ENCODE measurements at regions of chr2 and their contacts with region 1.

Region 1: GRCh38 chr2:216114714-216115557 is 5.8 kb downstream of the XRCC5 start:
- DNase-seq: peak; percentile 87 to 96 (median 93)
- H3K4me3 ChIP-seq: peak overlapping the region; percentile 37 to 80 (median 66)
- H3K27ac ChIP-seq: peak overlapping the region; percentile 66 to 99 (median 94)
- H3K27me3 ChIP-seq: no peaks in the 10 kb centered on the region
- CTCF ChIP-seq: peak; percentile 81 to 98 (median 92)

Region 2: DNA sequence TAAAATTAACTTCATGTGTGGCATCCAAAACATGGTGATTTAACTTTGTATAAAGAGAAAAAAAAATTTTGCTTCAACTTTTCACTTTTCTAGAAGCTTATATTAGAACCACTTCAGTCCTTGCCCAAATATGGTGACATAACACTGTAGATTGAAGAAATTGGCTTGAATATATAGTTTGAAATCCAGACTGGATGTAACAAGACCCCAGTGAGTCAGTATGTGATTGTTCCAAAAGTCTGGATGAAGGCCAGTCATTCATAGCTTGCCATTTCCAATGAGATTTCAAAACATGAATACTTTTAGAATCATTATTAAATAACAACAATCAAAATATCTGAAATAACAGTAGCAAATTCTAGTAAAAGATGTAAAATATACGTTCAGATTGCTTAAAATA is 574.3 kb before region 1 on chr2:
- intact Hi-C with region 1: no loop called
- DNase-seq: no peak
- H3K4me3 ChIP-seq: no peak overlapping the region
- H3K27ac ChIP-seq: no peak overlapping the region
- H3K27me3 ChIP-seq: no peaks in the 10 kb centered on the region
- CTCF ChIP-seq: no peak

Region 3: GRCh38 chr2:216151313-216152030 is 36.5 kb after region 1 on chr2:
- intact Hi-C with region 1: no loop called
- DNase-seq: no peak
- H3K4me3 ChIP-seq: no peak overlapping the region
- H3K27ac ChIP-seq: no peak overlapping the region
- H3K27me3 ChIP-seq: no peaks in the 10 kb centered on the region
- CTCF ChIP-seq: peak in 18 of 56 donors; percentile 6 to 38 (median 17)

Region 4: GRCh38 chr2:216498418-216499413 is 383.8 kb after region 1 on chr2 and contains the start of gene RPL37A:
- intact Hi-C with region 1: loop called in 1 of 2 experiments (anchors 10 kb)
- DNase-seq: peak; percentile 90 to 96 (median 94)
- H3K4me3 ChIP-seq: peak within 1 kb of the TSS; percentile 53 to 96 (median 81)
- H3K27ac ChIP-seq: peak within 1 kb of the TSS; percentile 40 to 95 (median 87)
- H3K27me3 ChIP-seq: no peaks in the 10 kb centered on the region
- CTCF ChIP-seq: peak in 34 of 56 donors; percentile 6 to 53 (median 26)
- total RNA-seq, gene RPL37A: 791 to 1,871 (median 1,178) TPM

Measured in dorsolateral prefrontal cortex (tissue), 120 donors.